Activated CD8-positive, alpha-beta T cell treated with anti-CD3 and anti-CD28 coated beads, Interleukin-2, amount 10 ng/mL, durations not matched to agents 7 days and 5 days (primary cell): ENCODE measurements at regions of chr1 and their contacts with region 1.

Region 1: DNA sequence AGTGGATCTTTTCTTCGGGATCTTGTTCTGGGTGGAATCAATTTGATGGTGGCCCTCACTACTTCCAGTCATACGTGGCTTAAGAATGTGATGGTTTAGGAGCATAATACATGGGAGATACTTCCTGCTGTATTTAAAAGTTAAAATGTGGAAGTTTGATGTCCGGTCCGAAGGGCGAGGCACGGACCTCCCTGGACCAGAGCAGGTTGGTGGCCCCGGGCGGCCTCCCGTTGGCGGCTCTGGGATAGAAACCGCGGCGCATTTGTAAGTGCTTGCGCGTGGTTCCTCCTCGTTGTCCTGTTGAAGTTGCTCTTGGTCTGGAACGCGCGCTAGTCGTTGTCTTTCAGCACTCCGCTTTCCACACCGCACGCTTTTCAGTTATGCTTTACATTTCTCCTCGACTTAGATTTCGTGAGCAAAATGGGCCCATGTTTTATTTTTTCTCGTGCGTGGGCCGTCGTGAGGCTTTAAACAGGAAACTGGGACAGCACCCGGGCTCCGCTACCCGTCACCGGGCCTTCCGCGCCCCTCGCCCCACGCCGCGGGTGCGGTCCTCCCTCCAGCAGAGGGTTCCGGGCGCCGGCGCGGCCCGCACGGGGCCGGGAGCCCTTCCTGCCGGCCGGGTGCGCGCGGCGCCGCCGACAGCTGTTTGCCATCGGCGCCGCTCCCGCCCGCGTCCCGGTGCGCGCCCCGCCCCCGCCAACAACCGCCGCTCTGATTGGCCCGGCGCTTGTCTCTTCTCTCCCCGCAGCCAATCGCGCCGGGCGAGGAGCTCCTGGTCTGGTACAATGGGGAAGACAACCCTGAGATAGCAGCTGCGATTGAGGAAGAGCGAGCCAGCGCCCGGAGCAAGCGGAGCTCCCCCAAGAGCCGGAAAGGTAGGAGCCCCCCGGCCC is 48.9 kb downstream of the PRDM2 start:
- DNase-seq: peak; percentile 96
- ATAC-seq: peak; percentile 95
- H3K4me3 Mint-ChIP-seq: peak overlapping the region; percentile 87
- H3K27ac Mint-ChIP-seq: peak overlapping the region; percentile 93
- H3K4me1 Mint-ChIP-seq: peaks cover 42% of the 10 kb centered on the region
- H3K27me3 Mint-ChIP-seq: no peaks in the 10 kb centered on the region

Region 2: DNA sequence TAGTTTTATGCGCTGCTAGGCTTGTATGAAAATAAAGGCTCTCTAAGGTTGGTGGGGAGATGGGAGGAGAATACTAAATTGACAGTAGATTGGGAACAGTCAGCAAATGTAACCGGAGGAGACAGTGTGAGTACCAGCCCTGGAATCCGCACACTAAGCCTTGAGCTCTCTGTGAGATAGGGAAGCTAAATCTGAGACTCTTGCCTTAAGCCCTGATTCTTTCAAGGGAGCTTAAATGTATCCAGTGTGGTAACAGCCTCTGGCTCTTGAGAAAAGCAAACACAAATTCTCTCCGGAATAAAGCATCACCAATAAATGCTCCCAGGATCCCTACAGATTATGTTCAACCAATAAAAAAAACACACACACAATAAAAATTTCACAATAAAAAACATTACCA is 198.2 kb before region 1 on chr1:
- CTCF ChIA-PET with region 1: no interaction called
- POLR2A ChIA-PET with region 1: no interaction called
- DNase-seq: no peak
- ATAC-seq: no peak
- H3K4me3 Mint-ChIP-seq: no peak overlapping the region
- H3K27ac Mint-ChIP-seq: no peak overlapping the region
- H3K4me1 Mint-ChIP-seq: no peaks in the 10 kb centered on the region
- H3K27me3 Mint-ChIP-seq: peaks cover 2% of the 10 kb centered on the region

Region 3: DNA sequence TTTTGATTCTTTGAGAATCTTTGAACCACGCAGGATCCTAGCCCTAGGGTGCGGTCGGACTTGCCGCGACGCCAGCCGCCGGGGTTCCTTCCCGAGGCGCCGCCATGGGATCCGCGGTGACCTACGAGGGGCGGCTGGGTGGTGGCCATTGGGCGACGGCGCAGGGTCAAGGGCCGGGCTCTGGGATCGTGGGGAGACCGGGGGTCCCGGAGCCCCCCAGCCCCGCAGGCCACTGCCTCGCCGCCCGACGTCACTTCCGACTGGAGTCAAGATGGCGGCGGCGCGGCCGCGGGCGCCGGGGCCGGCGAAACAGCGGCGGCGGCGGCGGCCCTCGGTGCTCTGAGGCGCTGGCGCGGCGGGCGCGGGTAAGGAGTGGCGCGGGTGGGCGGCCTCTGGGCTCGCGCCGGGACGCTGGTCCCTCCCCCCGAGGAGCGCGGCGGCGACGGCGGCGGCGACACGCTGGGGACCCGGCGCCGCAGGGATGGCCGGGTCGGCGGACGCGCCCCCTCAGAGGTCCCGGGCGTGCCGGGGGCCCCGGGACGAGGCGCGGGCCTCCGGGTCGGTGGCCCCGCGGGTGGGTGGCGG is 48.8 kb before region 1 on chr1 and contains the start of gene PRDM2:
- CTCF ChIA-PET with region 1: interaction called, 12 read pairs
- POLR2A ChIA-PET with region 1: interaction called, 15 read pairs
- DNase-seq: peak; percentile 64
- ATAC-seq: peak; percentile 71
- H3K4me3 Mint-ChIP-seq: peak within 1 kb of the TSS; percentile 87
- H3K27ac Mint-ChIP-seq: peak within 1 kb of the TSS; percentile 93
- H3K4me1 Mint-ChIP-seq: peaks cover 47% of the 10 kb centered on the region
- H3K27me3 Mint-ChIP-seq: peaks cover 2% of the 10 kb centered on the region
- total RNA-seq, gene PRDM2: 49.3 to 50.4 TPM

Region 4: DNA sequence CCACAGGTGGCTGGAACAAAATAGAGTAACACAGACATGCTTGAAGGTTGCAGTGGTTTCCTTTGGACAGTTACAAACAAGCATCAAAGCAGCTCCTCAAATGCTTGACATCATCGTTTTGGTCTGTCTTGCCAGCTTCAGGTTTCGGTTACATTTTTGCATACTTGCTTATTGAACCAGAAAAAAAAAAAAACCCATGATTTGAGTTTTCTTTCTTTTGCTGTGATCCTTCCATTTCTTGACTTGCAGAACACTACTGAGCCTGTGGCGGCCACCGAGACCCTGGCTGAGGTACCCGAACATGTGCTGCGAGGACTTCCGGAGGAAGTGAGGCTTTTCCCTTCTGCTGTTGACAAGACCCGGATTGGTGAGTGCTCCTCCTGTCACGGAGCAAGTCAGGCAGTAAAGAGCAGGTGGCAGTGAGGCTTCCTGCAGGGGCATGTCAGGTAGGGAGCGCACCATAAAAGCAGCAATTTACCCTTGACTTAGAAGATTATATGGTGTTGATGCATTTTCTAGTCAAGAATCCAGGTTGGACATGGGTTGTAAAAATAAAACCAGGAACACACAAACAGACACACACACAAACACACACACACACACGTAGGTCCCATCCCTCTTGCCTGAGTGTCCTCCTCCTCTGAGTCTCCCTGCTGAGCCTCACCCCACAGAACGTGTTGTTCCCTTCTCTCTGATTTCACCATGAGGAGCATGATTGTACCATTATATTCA is 17.9 kb before region 1 on chr1:
- CTCF ChIA-PET with region 1: interaction called, 16 read pairs
- POLR2A ChIA-PET with region 1: interaction called, 32 read pairs
- DNase-seq: peak; percentile 92
- ATAC-seq: peak; percentile 89
- H3K4me3 Mint-ChIP-seq: peak overlapping the region; percentile 77
- H3K27ac Mint-ChIP-seq: peak overlapping the region; percentile 98
- H3K4me1 Mint-ChIP-seq: peaks cover 76% of the 10 kb centered on the region
- H3K27me3 Mint-ChIP-seq: no peaks in the 10 kb centered on the region